Lower leg skin (tissue), 4 donors: ENCODE measurements at regions of chr2 and their contacts with region 1.

Region 1: DNA sequence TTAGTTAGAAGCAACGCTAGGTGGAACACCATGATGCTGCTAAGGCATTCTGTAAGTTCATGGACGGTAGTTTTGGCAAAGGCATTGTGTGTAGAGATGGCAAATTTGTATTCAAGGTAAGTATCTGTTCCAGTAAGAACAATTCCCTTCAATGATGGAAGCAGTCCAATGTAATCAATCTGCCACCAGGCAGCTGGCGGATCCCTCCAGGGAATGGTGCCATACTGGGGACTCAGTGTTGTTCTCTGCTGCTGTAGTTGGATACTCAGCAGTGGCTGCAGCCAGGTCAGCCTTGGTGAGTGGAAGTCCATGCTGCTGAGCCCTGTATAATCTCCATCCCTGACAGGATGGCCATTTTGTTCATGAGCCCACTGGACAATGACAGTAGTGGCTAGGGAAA is 62.8 kb downstream of the ARL6IP6 start:
- DNase-seq: no peak
- H3K4me3 ChIP-seq: no peak overlapping the region
- CTCF ChIP-seq: no peak
- POLR2A ChIP-seq: no peak

Region 2: GRCh38 chr2:152804687-152805408 is 23.7 kb after region 1 on chr2:
- intact Hi-C with region 1: no loop called
- DNase-seq: no peak
- H3K4me3 ChIP-seq: no peak overlapping the region
- CTCF ChIP-seq: no peak
- POLR2A ChIP-seq: no peak

Region 3: GRCh38 chr2:152858594-152859265 is 77.6 kb after region 1 on chr2:
- intact Hi-C with region 1: loop called (anchors 2 kb)
- DNase-seq: no peak
- H3K4me3 ChIP-seq: no peak overlapping the region
- CTCF ChIP-seq: no peak
- POLR2A ChIP-seq: no peak